Activated naive CD4-positive, alpha-beta T cell treated with anti-CD3 and anti-CD28 coated beads for 36 hours (primary cell): ENCODE measurements at regions of chr2 and their contacts with region 1.

Region 1: DNA sequence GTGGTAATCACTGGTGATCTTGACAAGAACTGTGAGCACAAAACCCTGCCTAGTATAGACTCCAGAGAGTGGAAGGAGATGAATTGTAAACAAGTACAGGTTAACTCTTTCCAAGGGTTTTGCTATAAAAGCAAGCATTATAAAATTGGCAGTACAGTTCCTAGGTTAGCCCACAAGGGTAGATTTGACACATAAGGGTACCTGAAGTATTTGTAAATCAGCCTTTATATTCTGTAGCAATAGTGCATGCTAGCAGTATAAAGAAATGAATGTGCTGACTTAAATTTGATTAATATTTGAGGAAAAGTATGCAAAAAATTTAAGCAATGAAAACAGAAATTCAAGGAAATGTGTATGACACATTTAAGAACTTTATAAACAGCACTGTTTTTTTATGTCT is 42.4 kb downstream of the SP3 start:
- DNase-seq: no peak
- H3K4me3 Mint-ChIP-seq: no peak overlapping the region
- H3K27ac Mint-ChIP-seq: no peak overlapping the region
- H3K4me1 Mint-ChIP-seq: peaks cover 64% of the 10 kb centered on the region
- H3K27me3 Mint-ChIP-seq: no peaks in the 10 kb centered on the region

Region 2: GRCh38 chr2:173891315-173892037 is 31.3 kb before region 1 on chr2:
- CTCF ChIA-PET with region 1: no interaction called
- intact Hi-C with region 1: no loop called
- DNase-seq: no peak
- H3K4me3 Mint-ChIP-seq: no peak overlapping the region
- H3K27ac Mint-ChIP-seq: no peak overlapping the region
- H3K4me1 Mint-ChIP-seq: peaks cover 9% of the 10 kb centered on the region
- H3K27me3 Mint-ChIP-seq: peaks cover 3% of the 10 kb centered on the region

Region 3: DNA sequence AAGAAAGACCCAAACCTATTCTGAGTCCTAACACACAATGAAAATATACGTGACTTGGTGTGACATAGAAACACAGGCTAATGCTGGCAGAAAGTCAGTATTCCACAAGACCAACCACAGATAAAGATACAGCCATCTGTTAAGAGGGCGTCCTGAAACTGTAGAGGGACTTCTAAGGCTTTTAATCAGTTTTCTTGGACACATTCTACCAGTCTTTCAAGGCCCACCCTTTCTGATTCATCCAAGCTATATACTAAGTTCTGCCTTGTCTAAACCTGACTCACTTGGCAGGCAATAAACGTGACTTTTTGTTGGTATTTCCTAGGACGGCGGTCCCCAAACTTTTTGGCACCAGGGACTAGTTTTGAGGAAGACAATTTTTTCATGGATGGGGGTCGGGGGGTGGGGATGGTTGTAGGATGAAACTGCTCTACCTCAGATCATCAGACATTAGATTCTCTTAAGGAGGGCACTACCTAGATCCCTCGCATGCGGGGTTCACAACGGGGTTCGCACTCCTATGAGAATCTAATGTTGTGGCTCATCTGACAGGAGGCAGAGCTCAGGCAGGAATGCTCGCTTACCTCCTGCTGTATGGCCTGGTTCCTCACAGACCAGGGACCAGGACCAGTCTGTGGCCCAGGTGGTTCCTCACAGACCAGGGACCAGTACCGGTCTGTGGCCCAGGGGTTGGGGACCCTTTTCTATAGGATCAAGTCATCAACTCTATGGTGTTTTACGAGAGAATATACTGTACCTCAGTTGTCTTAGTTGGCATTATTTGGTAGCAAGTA is 19.0 kb before region 1 on chr2:
- CTCF ChIA-PET with region 1: no interaction called
- intact Hi-C with region 1: loop called (anchors 2 kb)
- DNase-seq: no peak
- H3K4me3 Mint-ChIP-seq: no peak overlapping the region
- H3K27ac Mint-ChIP-seq: no peak overlapping the region
- H3K4me1 Mint-ChIP-seq: peaks cover 3% of the 10 kb centered on the region
- H3K27me3 Mint-ChIP-seq: no peaks in the 10 kb centered on the region